ENCODE measurements at regions of chr4 and their contacts with region 1.

Region 1: GRCh38 chr4:115945026-115945425 is 831.6 kb upstream of the NDST4 start:
- DNase-seq: no peak
- ATAC-seq: no peak
- H3K4me3 ChIP-seq: no peak overlapping the region
- H3K27ac ChIP-seq: no peak overlapping the region
- H3K4me1 ChIP-seq: no peaks in the 10 kb centered on the region
- H3K27me3 ChIP-seq: no peaks in the 10 kb centered on the region
- CTCF ChIP-seq: no peak
- EP300 ChIP-seq: no peak
- POLR2A ChIP-seq: no peak
- RAD21 ChIP-seq: no peak

Region 2: GRCh38 chr4:115781528-115782146 is 163.4 kb before region 1 on chr4:
- CTCF ChIA-PET with region 1: no interaction called
- POLR2A ChIA-PET with region 1: no interaction called
- RAD21 ChIA-PET with region 1: no interaction called
- SMC1A ChIA-PET with region 1: no interaction called
- in situ Hi-C with region 1: no loop called
- intact Hi-C with region 1: loop called (anchors 5 kb)
- DNase-seq: peak; percentile 25
- ATAC-seq: peak; percentile 82
- H3K4me3 ChIP-seq: peak overlapping the region; percentile 21; the same call in 1 of the 2 replicates
- H3K27ac ChIP-seq: no peak overlapping the region; the same call in 1 of the 2 replicates
- H3K4me1 ChIP-seq: no peaks in the 10 kb centered on the region
- H3K27me3 ChIP-seq: no peaks in the 10 kb centered on the region
- CTCF ChIP-seq: no peak
- EP300 ChIP-seq: no peak; a peak in 2 of 4 replicates
- POLR2A ChIP-seq: no peak
- RAD21 ChIP-seq: no peak

Region 3: GRCh38 chr4:115851918-115852766 is 92.9 kb before region 1 on chr4:
- CTCF ChIA-PET with region 1: no interaction called
- POLR2A ChIA-PET with region 1: no interaction called
- RAD21 ChIA-PET with region 1: no interaction called
- SMC1A ChIA-PET with region 1: no interaction called
- in situ Hi-C with region 1: no loop called
- intact Hi-C with region 1: no loop called
- DNase-seq: peak; percentile 19
- ATAC-seq: peak; percentile 88
- H3K4me3 ChIP-seq: no peak overlapping the region
- H3K27ac ChIP-seq: no peak overlapping the region
- H3K4me1 ChIP-seq: peaks cover 9% of the 10 kb centered on the region
- H3K27me3 ChIP-seq: no peaks in the 10 kb centered on the region
- CTCF ChIP-seq: peak; percentile 72 to 74 (median 72)
- EP300 ChIP-seq: no peak
- POLR2A ChIP-seq: no peak
- RAD21 ChIP-seq: peak; percentile 76

Measured in GM12878 (cell line).